HAP-1 (cell line): ENCODE measurements at regions of chr1 and their contacts with region 1.

Region 1: GRCh38 chr1:209576798-209577197 is 6.7 kb upstream of the CAMK1G start:
- DNase-seq: peak; percentile 47 to 85
- H3K4me3 ChIP-seq: no peak overlapping the region
- H3K4me1 ChIP-seq: no peaks in the 10 kb centered on the region
- H3K27me3 ChIP-seq: peaks cover 24% of the 10 kb centered on the region

Region 2: GRCh38 chr1:209692745-209693504 is 116.1 kb after region 1 on chr1:
- in situ Hi-C with region 1: loop called (anchors 10 kb)
- DNase-seq: peak; percentile 61 to 81
- H3K4me3 ChIP-seq: no peak overlapping the region
- H3K4me1 ChIP-seq: no peaks in the 10 kb centered on the region
- H3K27me3 ChIP-seq: peaks cover 17% of the 10 kb centered on the region